ENCODE measurements at regions of chr6 and their contacts with region 1.

Region 1: GRCh38 chr6:43926634-43927524 is 156.9 kb downstream of the VEGFA start:
- DNase-seq: peak; percentile 86 to 99
- H3K4me3 ChIP-seq: peak overlapping the region; percentile 7; the same call in 1 of the 2 replicates
- H3K27ac ChIP-seq: peak overlapping the region; percentile 99
- H3K4me1 ChIP-seq: peaks cover 57% of the 10 kb centered on the region
- H3K27me3 ChIP-seq: no peaks in the 10 kb centered on the region
- CTCF ChIP-seq: no peak

Region 2: DNA sequence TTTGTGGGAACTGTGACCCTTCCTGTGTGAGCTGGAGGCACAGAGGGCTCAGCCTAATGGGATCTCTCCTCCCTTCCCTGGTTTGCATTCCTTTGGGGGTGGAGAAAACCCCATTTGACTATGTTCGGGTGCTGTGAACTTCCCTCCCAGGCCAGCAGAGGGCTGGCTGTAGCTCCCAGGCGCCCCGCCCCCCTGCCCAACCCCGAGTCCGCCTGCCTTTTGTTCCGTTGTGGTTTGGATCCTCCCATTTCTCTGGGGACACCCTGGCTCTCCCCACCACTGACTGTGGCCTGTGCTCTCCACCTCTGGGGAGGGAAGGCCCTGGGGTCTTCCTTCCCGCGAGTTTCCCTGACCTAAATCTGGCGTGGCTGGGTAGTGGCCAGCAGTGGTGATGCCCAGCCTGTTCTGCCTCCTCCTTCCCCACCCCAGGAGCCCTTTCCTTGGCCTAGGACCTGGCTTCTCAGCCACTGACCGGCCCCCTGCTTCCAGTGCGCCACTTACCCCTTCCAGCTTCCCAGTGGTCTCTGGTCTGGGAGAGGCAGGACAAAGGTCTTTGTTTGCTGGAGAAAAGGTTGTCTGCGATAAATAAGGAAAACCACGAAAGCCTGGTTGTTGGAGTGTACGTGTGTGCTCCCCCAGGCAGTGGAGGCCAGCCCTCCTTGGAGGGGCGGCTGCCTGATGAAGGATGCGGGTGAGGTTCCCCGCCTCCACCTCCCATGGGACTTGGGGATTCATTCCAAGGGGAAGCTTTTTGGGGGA is 151.9 kb before region 1 on chr6:
- CTCF ChIA-PET with region 1: interaction called, 7 read pairs
- POLR2A ChIA-PET with region 1: interaction called, 3 read pairs
- intact Hi-C with region 1: loop called (anchors 1 kb)
- DNase-seq: peak; percentile 65 to 71
- H3K4me3 ChIP-seq: peak overlapping the region; percentile 90
- H3K27ac ChIP-seq: peak overlapping the region; percentile 94; the same call in 1 of the 2 replicates
- H3K4me1 ChIP-seq: peaks cover 35% of the 10 kb centered on the region
- H3K27me3 ChIP-seq: no peaks in the 10 kb centered on the region
- CTCF ChIP-seq: peak; percentile 85

Region 3: GRCh38 chr6:43874267-43874666 is 52.6 kb before region 1 on chr6:
- CTCF ChIA-PET with region 1: interaction called, 4 read pairs
- POLR2A ChIA-PET with region 1: no interaction called
- intact Hi-C with region 1: loop called (anchors 2 kb)
- DNase-seq: peak; percentile 75 to 80
- H3K4me3 ChIP-seq: no peak overlapping the region
- H3K27ac ChIP-seq: peak overlapping the region; percentile 72
- H3K4me1 ChIP-seq: peaks cover 54% of the 10 kb centered on the region
- H3K27me3 ChIP-seq: no peaks in the 10 kb centered on the region
- CTCF ChIP-seq: no peak

Region 4: DNA sequence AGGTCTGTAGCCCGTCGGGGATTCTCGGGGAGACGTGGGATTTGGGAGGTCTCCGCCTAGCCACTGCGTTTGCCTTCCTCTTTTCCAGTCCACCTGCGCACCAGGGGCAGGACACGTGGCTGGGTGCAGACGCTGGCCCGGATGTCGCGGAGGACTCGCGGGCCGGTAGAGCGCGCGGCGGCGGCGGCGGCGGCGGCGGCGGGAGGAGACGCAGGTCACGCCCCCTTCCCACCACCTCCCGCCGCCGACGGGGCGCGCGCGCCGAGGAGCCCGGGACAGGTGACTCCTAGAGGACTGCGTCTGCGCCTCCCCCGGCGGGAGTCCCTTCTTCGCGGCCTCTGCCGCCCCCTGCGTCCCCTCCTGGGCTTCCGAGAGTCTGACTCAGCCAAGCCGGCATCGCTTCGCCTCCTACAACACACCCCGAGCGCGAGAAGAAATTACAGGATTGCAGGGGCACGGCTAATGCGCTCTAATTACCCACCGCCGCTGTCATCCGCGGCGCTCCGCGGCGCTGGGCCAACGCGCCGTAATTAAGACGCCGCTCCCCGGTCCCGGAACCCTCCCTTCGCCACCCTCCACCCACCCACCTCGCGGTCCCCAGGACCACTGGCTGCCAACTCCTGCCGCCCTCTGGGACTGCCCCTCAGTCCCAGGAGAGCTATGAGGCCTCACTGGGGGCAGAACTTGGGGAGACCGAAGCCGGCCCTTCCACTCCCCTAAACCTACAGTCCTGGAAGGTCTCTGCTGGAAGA is 75.9 kb after region 1 on chr6:
- CTCF ChIA-PET with region 1: no interaction called
- POLR2A ChIA-PET with region 1: no interaction called
- intact Hi-C with region 1: loop called (anchors 2 kb)
- DNase-seq: no peak
- H3K4me3 ChIP-seq: peak overlapping the region; percentile 68; the same call in 1 of the 2 replicates
- H3K27ac ChIP-seq: peak overlapping the region; percentile 93
- H3K4me1 ChIP-seq: peaks cover 65% of the 10 kb centered on the region
- H3K27me3 ChIP-seq: no peaks in the 10 kb centered on the region
- CTCF ChIP-seq: no peak

Region 5: GRCh38 chr6:44058617-44059358 is 131.9 kb after region 1 on chr6:
- CTCF ChIA-PET with region 1: no interaction called
- POLR2A ChIA-PET with region 1: interaction called, 3 read pairs
- intact Hi-C with region 1: loop called (anchors 5 kb)
- DNase-seq: peak; percentile 89 to 99
- H3K4me3 ChIP-seq: peak overlapping the region; percentile 25; the same call in 1 of the 2 replicates
- H3K27ac ChIP-seq: peak overlapping the region; percentile 95
- H3K4me1 ChIP-seq: peaks cover 86% of the 10 kb centered on the region
- H3K27me3 ChIP-seq: no peaks in the 10 kb centered on the region
- CTCF ChIP-seq: no peak

Measured in PC-9 (cell line).